Activated CD4-positive, alpha-beta memory T cell treated with anti-CD3 and anti-CD28 coated beads for 36 hours (primary cell): ENCODE measurements at regions of chrX and their contacts with region 1.

Region 1: DNA sequence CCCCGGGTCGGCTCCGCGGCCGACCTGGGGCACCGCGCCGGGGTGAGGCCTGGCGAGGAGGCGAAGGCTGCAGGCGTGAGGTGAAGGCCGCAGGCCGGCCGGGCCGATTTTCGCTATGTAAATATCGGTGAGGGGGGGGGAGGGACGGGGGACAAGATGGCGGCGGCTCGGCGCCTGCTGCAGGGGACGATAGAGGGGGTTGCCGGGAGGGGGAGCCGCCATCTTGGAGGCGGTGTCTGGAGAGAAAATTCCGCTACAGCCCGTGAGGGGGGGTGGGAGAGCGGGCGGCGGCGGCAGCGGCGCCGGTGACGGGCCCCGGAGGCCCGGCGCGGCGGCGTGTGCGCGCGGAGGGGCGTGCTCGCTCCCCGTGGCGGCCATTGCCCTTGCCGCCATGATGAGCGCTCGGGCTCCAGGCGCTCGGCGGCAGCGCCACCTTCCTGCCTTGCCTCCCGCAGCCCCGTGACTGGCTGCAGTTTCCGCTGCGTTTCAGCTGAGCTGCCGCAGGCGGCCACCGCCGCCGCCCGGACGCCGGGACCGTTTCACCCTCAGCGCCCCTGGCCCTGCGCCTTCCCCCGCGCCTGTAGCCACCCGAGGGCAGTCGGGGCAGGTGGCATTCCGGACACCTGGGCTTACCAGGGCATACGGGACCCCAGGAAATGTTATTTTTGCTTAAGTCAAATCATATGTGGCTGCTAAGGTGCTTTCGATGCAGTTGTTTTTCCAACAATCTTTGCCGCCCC is 692 bp downstream of the ZFX start:
- DNase-seq: peak; percentile 89
- H3K4me3 Mint-ChIP-seq: peak overlapping the region; percentile 79
- H3K27ac Mint-ChIP-seq: peak overlapping the region; percentile 83
- H3K4me1 Mint-ChIP-seq: peaks cover 54% of the 10 kb centered on the region
- H3K27me3 Mint-ChIP-seq: no peaks in the 10 kb centered on the region

Region 2: GRCh38 chrX:23742697-23743622 is 407.3 kb before region 1 on chrX and contains the start of gene ACOT9:
- CTCF ChIA-PET with region 1: no interaction called
- POLR2A ChIA-PET with region 1: no interaction called
- intact Hi-C with region 1: loop called (anchors 1 kb)
- DNase-seq: peak; percentile 87
- H3K4me3 Mint-ChIP-seq: peak within 1 kb of the TSS; percentile 86
- H3K27ac Mint-ChIP-seq: peak within 1 kb of the TSS; percentile 86
- H3K4me1 Mint-ChIP-seq: peaks cover 32% of the 10 kb centered on the region
- H3K27me3 Mint-ChIP-seq: no peaks in the 10 kb centered on the region
- total RNA-seq, gene ACOT9: 50.2 to 52.1 TPM

Region 3: GRCh38 chrX:23907498-23908218 is 242.6 kb before region 1 on chrX and contains the starts of genes APOO and CXorf58:
- CTCF ChIA-PET with region 1: no interaction called
- POLR2A ChIA-PET with region 1: no interaction called
- intact Hi-C with region 1: loop called (anchors 1 kb)
- DNase-seq: peak; percentile 94
- H3K4me3 Mint-ChIP-seq: peak within 1 kb of the TSS; percentile 74
- H3K27ac Mint-ChIP-seq: peak within 1 kb of the TSS; percentile 87
- H3K4me1 Mint-ChIP-seq: peaks cover 21% of the 10 kb centered on the region
- H3K27me3 Mint-ChIP-seq: no peaks in the 10 kb centered on the region
- total RNA-seq, gene APOO: 32.8 to 35.0 TPM
- total RNA-seq, gene CXorf58: 0.17 TPM in 1 of 2 experiments, not detected in the other

Region 4: DNA sequence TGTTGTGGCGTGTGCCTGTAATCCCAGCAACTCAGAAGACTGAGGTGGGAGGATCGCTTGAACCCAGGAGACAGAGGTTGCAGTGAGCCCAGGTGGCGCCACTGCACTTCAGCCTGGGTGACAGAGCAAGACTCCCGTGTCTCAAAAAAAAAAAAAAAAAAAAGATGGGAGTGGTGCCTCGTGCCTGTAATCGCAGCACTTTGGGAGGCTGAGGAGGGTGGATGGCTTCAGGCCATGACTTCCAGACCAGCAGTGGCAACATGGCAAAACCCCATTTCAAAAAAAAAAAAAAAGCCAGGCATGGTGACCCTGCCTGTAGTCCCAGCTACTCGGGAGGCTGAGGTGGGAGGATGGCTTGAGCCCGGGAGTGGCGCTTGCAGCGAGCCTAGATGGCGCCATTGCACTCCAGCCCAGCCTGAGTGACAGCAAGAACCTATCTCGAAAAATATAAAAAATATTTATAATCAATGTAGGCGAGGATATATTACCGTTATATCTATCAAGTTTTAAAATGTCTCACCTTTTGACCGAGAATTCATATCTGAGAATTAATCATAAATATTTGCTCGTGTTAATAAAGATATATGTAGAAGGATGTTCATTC is 68.5 kb before region 1 on chrX:
- CTCF ChIA-PET with region 1: interaction called, 3 read pairs
- POLR2A ChIA-PET with region 1: interaction called, 3 read pairs
- intact Hi-C with region 1: loop called (anchors 1 kb)
- DNase-seq: peak; percentile 70
- H3K4me3 Mint-ChIP-seq: no peak overlapping the region
- H3K27ac Mint-ChIP-seq: no peak overlapping the region
- H3K4me1 Mint-ChIP-seq: peaks cover 16% of the 10 kb centered on the region
- H3K27me3 Mint-ChIP-seq: no peaks in the 10 kb centered on the region

Region 5: GRCh38 chrX:24169211-24169610 is 19.0 kb after region 1 on chrX:
- CTCF ChIA-PET with region 1: no interaction called
- POLR2A ChIA-PET with region 1: interaction called, 3 read pairs
- intact Hi-C with region 1: loop called (anchors 1 kb)
- DNase-seq: no peak
- H3K4me3 Mint-ChIP-seq: peak overlapping the region; percentile 53
- H3K27ac Mint-ChIP-seq: peak overlapping the region; percentile 92
- H3K4me1 Mint-ChIP-seq: peaks cover 52% of the 10 kb centered on the region
- H3K27me3 Mint-ChIP-seq: no peaks in the 10 kb centered on the region

Region 6: DNA sequence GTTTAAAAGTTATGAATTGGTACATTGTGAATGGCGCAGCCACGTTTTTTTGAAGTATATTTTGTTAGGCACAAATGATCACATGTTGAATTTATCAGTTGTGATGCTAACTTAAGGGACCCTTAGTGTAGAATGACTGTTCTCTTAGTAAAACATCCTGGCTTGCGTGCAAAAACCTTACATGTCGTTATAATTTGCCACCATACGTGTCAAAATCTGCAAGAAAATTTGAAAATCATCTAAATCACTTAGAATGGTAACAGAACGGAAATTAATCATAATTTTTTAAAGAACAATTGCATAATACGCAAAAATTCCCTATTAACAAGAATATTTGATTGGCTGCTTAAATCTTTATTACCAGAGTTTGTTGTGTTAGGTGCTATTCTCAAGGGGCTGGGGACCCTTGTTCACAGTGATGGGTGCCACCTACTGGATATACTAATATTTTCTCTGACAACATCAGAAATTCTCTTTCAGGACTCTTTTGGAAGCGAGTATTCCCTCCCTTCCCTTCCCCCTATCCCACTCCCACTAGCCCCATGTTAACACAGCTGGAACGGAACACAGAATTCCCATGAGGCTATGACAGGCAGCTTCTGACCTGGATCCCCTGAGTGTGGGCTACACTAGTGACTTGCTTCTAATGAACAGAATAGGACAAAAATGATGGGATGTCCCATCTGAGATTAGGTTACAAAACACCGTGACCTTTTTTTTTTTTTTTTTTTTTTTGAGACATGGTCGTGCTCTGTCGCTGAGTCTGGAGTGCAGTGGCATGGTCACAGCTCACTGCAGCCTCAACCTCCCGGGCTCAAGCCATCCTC is 91.8 kb after region 1 on chrX:
- CTCF ChIA-PET with region 1: no interaction called
- POLR2A ChIA-PET with region 1: no interaction called
- intact Hi-C with region 1: loop called (anchors 2 kb)
- DNase-seq: no peak
- H3K4me3 Mint-ChIP-seq: no peak overlapping the region
- H3K27ac Mint-ChIP-seq: no peak overlapping the region
- H3K4me1 Mint-ChIP-seq: peaks cover 11% of the 10 kb centered on the region
- H3K27me3 Mint-ChIP-seq: no peaks in the 10 kb centered on the region